ENCODE measurements at regions of chr19 and their contacts with region 1.

Region 1: GRCh38 chr19:16315825-16316505 is 8.7 kb upstream of the KLF2 start:
- DNase-seq: peak in 4 of 5 donors; percentile 68 to 75 (median 70)
- ATAC-seq: peak; percentile 54 to 76 (median 73)
- H3K4me3 ChIP-seq: peak overlapping the region in 1 of 12 donors; percentile 2
- H3K27ac ChIP-seq: peak overlapping the region; percentile 54 to 88 (median 77)
- H3K4me1 ChIP-seq: peaks cover 0 to 47% (median 27%) of the 10 kb centered on the region in 12 donors
- H3K27me3 ChIP-seq: no peaks in the 10 kb centered on the region
- CTCF ChIP-seq: no peak
- POLR2A ChIP-seq: no peak

Region 2: DNA sequence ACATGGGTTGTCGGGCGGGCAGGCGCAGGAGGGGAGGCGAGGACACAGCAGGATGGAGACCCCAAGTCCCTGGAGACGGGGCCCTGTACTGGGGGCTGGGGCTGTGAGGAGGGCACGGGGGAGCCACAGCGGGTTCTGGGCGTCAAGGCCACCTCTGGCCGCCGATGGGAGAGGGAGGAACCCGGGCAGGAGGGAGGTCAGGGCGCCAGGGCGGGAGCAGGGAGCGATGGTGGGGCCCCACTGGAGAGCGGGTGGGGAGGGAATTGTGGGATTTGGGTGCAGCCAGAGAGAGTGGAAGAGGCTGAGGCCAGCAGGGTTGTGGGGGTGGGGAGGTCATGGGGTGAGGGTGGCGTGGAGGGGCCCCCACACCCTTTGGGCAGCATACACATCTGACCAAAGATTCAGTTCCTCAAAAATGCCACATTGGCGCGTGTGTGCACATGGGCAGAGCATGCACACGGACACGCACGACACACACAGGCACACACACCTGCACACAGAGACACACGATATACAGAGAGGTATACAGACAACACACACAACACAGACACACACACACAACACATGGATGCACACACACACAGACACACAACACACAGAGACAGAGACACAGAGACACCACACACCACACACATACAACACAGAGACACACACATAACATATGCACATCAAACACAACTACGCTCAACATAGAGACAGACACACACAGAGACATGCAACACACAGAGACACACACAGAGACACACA is 63.3 kb before region 1 on chr19:
- intact Hi-C with region 1: loop called in 6 of 10 experiments (anchors 2 to 5 kb)
- DNase-seq: peak in 4 of 5 donors; percentile 44 to 66 (median 61)
- ATAC-seq: peak in 3 of 4 donors; percentile 12 to 54 (median 29)
- H3K4me3 ChIP-seq: no peak overlapping the region
- H3K27ac ChIP-seq: peak overlapping the region in 3 of 12 donors; percentile 30 to 80 (median 56)
- H3K4me1 ChIP-seq: peaks cover 0 to 25% (median 3%) of the 10 kb centered on the region in 12 donors
- H3K27me3 ChIP-seq: no peaks in the 10 kb centered on the region
- CTCF ChIP-seq: no peak
- POLR2A ChIP-seq: no peak

Region 3: GRCh38 chr19:16272945-16273344 is 43.0 kb before region 1 on chr19:
- intact Hi-C with region 1: no loop called
- DNase-seq: peak in 4 of 5 donors; percentile 47 to 75 (median 52)
- ATAC-seq: peak; percentile 52 to 71 (median 62)
- H3K4me3 ChIP-seq: no peak overlapping the region
- H3K27ac ChIP-seq: peak overlapping the region in 11 of 12 donors; percentile 5 to 80 (median 52)
- H3K4me1 ChIP-seq: peaks cover 0 to 19% (median 7%) of the 10 kb centered on the region in 12 donors
- H3K27me3 ChIP-seq: no peaks in the 10 kb centered on the region
- CTCF ChIP-seq: no peak
- POLR2A ChIP-seq: no peak

Region 4: DNA sequence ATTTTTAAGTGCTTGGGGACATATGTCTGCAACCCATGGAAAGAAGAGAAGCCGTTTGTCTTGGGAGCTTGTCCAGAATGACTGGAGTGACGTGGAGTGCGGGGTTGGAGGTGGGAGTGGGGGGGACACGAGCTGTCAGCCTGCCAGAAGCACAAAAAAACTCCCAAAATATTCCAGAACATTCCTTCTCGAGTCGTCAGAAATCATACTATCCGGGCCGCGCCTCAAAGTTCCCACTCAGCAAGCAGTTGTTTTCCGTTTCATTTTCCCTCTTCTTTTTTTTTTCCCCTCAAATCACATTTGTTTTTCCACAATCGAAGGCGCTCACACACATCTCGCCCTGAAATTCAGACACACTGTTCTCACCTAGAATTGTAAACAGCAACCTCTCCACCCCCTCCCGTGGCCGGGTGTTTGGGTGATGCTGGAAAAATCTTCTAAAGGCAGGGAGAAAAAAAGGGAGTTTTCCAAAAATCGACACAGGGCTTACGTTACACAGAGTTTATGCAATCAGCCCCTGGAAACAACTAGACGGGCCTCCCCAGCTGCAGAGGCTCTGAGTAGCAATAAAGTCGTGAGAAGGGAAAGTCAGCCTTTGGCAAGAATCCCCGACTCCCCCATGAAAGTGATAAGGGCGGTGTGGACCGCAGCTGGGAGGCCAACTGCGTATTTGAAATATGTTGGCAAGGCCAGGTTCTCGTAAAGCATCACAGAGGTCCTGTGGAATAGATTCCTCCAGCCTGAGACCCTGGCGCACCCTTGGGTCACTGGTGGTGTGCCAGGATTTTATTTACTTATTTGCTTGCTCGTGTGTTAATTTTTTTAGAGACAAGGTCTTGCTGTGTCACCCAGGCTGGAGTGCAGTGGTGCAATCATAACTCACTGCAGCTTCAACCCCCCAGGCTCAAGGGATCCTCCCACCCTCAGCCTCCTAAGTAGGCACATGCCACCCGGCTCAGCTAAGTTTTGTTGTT is 22.6 kb before region 1 on chr19:
- intact Hi-C with region 1: loop called in 7 of 10 experiments (anchors 1 to 5 kb)
- DNase-seq: peak in 4 of 5 donors; percentile 78 to 85 (median 84)
- ATAC-seq: peak; percentile 79 to 91 (median 86)
- H3K4me3 ChIP-seq: peak overlapping the region in 10 of 12 donors; percentile 4 to 47 (median 27)
- H3K27ac ChIP-seq: peak overlapping the region; percentile 79 to 97 (median 87)
- H3K4me1 ChIP-seq: peaks cover 0 to 45% (median 23%) of the 10 kb centered on the region in 12 donors
- H3K27me3 ChIP-seq: no peaks in the 10 kb centered on the region
- CTCF ChIP-seq: no peak
- POLR2A ChIP-seq: no peak

Region 5: DNA sequence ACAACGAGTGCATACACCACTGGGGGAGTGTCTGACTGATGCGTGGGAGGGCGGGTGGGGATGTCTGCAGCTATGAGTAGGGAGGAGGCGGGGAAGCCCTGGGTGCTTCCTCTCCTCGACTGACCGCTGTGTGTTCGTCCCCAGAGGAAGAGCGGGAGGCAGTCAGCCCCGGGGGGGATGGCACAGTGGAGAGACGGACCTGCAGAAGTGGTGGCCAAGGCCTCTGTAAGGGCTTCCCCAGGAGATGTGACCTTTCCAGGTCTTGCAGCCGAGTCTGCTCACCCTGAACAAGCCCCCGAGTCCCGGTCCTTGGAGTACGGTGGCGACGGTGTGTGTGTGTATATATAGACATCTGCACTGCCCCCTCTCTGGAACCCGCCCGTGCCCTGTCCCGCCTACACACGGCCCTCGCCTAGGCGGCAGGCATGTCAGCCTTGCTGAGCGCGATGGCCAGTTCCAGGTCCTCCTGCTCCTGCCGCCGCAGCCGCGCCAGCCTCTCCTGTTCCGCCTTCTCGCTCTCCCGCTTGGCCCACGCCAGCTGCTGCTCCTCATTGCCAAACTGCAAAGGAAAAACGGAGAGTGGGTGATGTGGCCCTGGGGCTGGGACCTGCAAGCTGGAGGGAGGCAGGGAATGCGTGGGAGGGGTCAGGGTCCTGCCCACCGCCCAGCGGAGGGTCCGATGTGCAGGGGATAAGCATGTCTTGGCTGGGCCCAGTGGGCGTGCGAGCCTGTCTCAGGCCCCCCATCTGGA is 39.5 kb after region 1 on chr19:
- intact Hi-C with region 1: no loop called
- DNase-seq: peak in 4 of 5 donors; percentile 52 to 76 (median 64)
- ATAC-seq: peak; percentile 44 to 77 (median 68)
- H3K4me3 ChIP-seq: peak overlapping the region in 10 of 12 donors; percentile 8 to 47 (median 25)
- H3K27ac ChIP-seq: peak overlapping the region in 8 of 12 donors; percentile 22 to 72 (median 34)
- H3K4me1 ChIP-seq: peaks cover 8 to 50% (median 26%) of the 10 kb centered on the region in 12 donors
- H3K27me3 ChIP-seq: no peaks in the 10 kb centered on the region
- CTCF ChIP-seq: no peak
- POLR2A ChIP-seq: no peak

Region 6: DNA sequence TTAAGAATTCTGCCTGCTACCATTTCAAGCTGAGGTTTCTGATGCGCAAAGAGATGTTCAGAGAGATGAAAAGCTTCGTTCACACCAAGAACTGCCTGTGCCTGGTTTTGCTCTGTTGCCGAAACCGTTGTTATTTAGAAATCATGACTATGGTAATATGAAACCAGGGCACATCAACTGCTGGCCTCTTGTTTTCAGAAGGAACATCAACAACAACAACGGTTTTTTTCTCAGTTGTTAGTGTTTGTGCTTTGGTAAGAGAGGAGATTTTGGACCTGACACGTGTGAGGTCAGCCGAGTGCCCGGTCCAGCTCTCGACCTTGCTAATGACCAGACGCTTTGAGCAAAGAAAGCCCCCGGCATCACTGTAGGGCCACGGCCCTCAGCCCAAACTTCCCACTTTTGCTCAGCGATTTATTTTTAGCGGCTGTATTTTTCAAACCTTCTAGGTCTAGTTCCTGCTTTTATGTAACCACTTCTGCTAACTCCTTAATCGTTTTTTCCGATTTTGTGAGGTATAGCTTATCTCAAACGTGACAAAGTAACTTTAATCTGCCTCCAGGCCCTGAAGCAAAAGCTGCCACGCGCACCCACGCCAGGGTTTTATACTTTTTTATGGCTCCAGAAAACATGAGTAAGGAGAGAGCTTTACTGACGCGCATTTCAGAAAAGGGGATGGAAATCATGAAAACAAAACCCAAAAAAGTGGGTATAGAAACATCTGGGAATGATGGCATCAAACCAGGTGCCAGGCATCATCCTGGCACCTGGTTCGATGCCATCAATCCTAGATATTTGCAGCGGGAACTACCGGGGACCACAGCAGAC is 50.7 kb after region 1 on chr19:
- intact Hi-C with region 1: no loop called
- DNase-seq: peak in 1 of 5 donors; percentile 24
- ATAC-seq: no peak
- H3K4me3 ChIP-seq: peak overlapping the region in 1 of 12 donors; percentile 28
- H3K27ac ChIP-seq: peak overlapping the region in 4 of 12 donors; percentile 15 to 87 (median 24)
- H3K4me1 ChIP-seq: peaks cover 0 to 90% (median 11%) of the 10 kb centered on the region in 12 donors
- H3K27me3 ChIP-seq: no peaks in the 10 kb centered on the region
- CTCF ChIP-seq: no peak
- POLR2A ChIP-seq: no peak